HepG2 (cell line): ENCODE measurements at regions of chr2 and their contacts with region 1.

Region 1: DNA sequence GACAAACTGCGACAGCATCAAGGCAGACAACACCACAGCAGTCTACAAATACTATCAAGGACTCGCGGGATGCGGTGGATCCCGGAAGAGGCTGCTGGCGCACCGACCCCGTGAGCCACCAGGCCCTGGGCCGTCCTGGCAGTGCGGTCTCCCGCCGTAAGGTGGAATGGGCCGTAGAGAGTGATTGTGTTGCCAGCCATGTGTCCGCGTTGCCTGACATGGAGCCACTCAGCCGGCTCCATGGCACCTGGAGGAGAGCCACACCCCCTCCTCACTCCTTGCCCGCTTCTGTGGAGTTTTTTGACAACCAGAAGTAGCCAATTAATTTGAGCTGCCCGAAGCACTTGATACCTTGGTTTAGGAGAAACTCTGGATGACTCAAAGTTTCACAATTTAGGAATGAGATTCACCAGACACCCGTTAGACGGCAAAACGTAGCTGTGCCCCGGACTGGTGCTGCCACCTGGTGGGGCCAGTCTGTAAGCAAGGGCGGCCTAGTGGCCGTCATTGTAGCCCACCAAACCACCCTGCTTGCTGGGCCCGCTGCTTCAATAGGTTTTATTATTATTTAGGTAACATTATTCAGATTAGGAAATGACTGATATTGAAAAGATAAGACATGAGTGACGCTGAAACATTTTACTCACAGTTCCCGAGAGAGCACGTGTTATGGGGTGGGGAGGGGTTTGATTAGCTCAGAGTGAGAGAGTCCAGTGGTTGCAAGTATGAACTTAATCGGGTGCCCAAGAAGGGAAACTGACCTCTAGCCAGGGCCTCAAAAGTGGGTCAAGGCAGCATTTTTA is 10.2 kb upstream of the IMP4 start:
- DNase-seq: peak; percentile 54
- ATAC-seq: peak; percentile 62
- H3K4me3 ChIP-seq: peak overlapping the region; percentile 0 to 58 (median 53); a peak in 4 of 6 replicates
- H3K27ac ChIP-seq: no peak overlapping the region
- H3K4me1 ChIP-seq: peaks cover 46% of the 10 kb centered on the region
- H3K27me3 ChIP-seq: peaks cover 0 to 43% of the 10 kb centered on the region in 2 experiments; a peak in 3 of 5 replicates
- CTCF ChIP-seq: peak; percentile 97
- EP300 ChIP-seq: no peak
- POLR2A ChIP-seq: no peak
- RAD21 ChIP-seq: peak; percentile 95

Region 2: DNA sequence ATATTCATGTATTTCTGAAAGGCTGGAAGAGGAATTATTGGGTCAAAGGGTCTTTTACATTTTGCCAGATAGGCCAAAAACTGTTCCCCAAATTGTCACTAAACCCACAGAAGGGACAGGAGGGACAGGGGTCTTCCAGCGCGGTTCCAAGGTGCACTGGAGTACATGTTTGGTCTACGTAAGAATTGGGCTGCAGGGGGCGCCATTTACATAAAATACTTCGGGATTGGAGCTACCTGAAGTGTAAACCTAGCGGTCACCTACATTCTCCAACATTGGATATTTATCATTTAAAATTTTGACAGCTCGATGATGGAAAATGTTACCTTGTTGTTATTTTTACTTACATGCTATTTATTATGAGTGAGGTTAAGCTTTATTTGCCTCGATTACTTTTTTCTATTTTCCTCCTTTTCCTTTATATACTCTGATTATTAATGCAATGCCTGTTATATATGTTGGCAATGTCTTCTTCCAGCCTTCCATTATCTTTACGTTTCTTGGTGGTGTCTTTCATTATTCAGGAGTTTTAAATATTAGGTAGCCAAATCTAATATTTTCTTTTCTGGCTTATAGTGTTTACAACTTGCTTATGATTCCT is 396.0 kb before region 1 on chr2:
- CTCF ChIA-PET with region 1: interaction called, 3 read pairs
- POLR2A ChIA-PET with region 1: no interaction called
- in situ Hi-C with region 1: loop called (anchors 10 kb)
- intact Hi-C with region 1: no loop called
- DNase-seq: peak; percentile 54
- ATAC-seq: peak; percentile 82
- H3K4me3 ChIP-seq: no peak overlapping the region
- H3K27ac ChIP-seq: no peak overlapping the region
- H3K4me1 ChIP-seq: no peaks in the 10 kb centered on the region
- H3K27me3 ChIP-seq: peaks cover 5 to 32% of the 10 kb centered on the region in 2 experiments; a peak in 3 of 5 replicates
- CTCF ChIP-seq: peak; percentile 66
- EP300 ChIP-seq: no peak
- POLR2A ChIP-seq: no peak
- RAD21 ChIP-seq: no peak; the same call in 1 of the 2 replicates

Region 3: DNA sequence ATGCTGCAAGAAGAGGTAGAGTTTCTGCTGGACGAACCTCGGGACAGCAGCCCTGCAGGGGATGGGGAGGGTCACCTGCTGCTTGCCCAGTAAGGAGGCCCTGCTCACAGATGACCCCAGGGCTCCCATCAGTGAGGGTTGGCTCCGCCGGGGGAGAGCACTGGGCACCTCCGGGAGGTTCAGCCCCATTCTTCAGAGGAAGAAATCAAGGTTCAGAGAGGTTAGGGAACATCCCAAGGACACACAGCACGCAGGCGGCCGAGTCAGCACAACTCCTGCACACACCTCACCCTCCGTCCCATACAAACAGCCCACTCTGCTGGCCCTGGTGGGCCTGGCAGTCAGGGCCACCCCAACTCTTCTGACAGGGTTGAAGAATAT is 175.9 kb before region 1 on chr2:
- CTCF ChIA-PET with region 1: interaction called, 14 read pairs
- POLR2A ChIA-PET with region 1: no interaction called
- in situ Hi-C with region 1: loop called (anchors 10 kb)
- intact Hi-C with region 1: loop called (anchors 1 kb)
- DNase-seq: no peak
- ATAC-seq: no peak
- H3K4me3 ChIP-seq: no peak overlapping the region
- H3K27ac ChIP-seq: no peak overlapping the region
- H3K4me1 ChIP-seq: no peaks in the 10 kb centered on the region
- H3K27me3 ChIP-seq: no peaks in the 10 kb centered on the region
- CTCF ChIP-seq: no peak
- EP300 ChIP-seq: no peak
- POLR2A ChIP-seq: no peak
- RAD21 ChIP-seq: no peak

Region 4: GRCh38 chr2:130342533-130343275 is 10.2 kb after region 1 on chr2 and contains the start of gene IMP4:
- CTCF ChIA-PET with region 1: no interaction called
- POLR2A ChIA-PET with region 1: interaction called, 26 read pairs
- in situ Hi-C with region 1: no loop called
- intact Hi-C with region 1: no loop called
- DNase-seq: peak; percentile 100
- ATAC-seq: peak; percentile 93
- H3K4me3 ChIP-seq: peak within 1 kb of the TSS; percentile 78 to 99 (median 94)
- H3K27ac ChIP-seq: peak within 1 kb of the TSS; percentile 80
- H3K4me1 ChIP-seq: peaks cover 28% of the 10 kb centered on the region
- H3K27me3 ChIP-seq: peaks cover 0 to 4% of the 10 kb centered on the region in 2 experiments; a peak in 1 of 5 replicates
- CTCF ChIP-seq: peak; percentile 77
- EP300 ChIP-seq: 0 out of 4 replicates have a peak, but pooled peaks of 1 of the 2 experiments have one; percentile 24
- POLR2A ChIP-seq: peak; percentile 72 to 88
- RAD21 ChIP-seq: peak; percentile 84
- total RNA-seq, gene IMP4: 142 and 153 TPM in 2 replicates

Region 5: GRCh38 chr2:130372055-130372832 is 39.8 kb after region 1 on chr2:
- CTCF ChIA-PET with region 1: no interaction called
- POLR2A ChIA-PET with region 1: no interaction called
- in situ Hi-C with region 1: no loop called
- intact Hi-C with region 1: no loop called
- DNase-seq: no peak
- ATAC-seq: peak; percentile 17
- H3K4me3 ChIP-seq: no peak overlapping the region
- H3K27ac ChIP-seq: no peak overlapping the region
- H3K4me1 ChIP-seq: no peaks in the 10 kb centered on the region
- H3K27me3 ChIP-seq: no peaks in the 10 kb centered on the region
- CTCF ChIP-seq: peak; percentile 30; the same call in 1 of the 2 replicates
- EP300 ChIP-seq: no peak
- POLR2A ChIP-seq: no peak
- RAD21 ChIP-seq: no peak

Region 6: DNA sequence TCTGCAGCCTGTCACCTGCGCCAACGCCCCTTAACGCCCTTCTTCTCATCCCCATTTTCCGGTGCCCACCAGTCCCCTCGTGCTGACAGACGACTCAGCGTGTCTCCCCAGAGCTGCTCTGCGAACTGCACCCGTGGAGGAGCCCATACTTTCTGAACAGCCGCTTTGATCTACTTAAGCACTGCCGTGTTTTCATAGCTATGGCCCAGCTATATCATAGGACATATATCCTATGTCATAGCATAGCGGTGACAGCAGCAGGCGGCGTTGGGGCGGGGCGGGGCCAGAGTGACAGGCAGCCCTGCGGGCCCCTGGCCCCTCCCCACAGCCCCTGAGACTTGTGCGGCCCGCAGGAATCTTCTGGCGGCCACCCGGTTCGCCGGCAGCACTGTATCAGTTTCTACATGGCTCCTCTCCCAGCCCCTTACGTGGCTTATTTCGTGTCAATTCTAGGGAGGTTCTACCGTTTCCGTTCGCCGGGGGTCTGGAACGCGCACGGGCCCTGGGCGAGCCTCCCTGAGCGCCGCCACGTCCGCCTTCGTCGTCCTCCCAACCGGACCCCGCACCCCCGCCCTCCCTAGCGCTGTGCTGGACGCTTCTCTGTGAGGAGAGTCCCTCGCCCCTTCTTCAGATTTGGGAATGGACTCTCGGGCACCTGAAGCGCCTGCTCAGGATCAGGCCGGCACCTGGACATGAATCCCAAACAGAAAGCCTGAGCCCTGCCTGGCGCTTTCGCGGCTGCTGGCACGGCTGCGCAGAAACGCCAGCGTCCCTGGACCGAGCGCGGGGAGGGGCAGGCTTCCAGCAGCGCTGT is 58.8 kb after region 1 on chr2:
- CTCF ChIA-PET with region 1: no interaction called
- POLR2A ChIA-PET with region 1: interaction called, 4 read pairs
- in situ Hi-C with region 1: no loop called
- intact Hi-C with region 1: loop called (anchors 2 kb)
- DNase-seq: peak; percentile 55
- ATAC-seq: peak; percentile 93
- H3K4me3 ChIP-seq: peak overlapping the region; percentile 75 to 82 (median 78)
- H3K27ac ChIP-seq: peak overlapping the region; percentile 36
- H3K4me1 ChIP-seq: peaks cover 31% of the 10 kb centered on the region
- H3K27me3 ChIP-seq: peaks cover 2 to 13% of the 10 kb centered on the region in 2 experiments; a peak in 2 of 5 replicates
- CTCF ChIP-seq: no peak
- EP300 ChIP-seq: no peak
- POLR2A ChIP-seq: peak; percentile 39 to 79; a peak in 3 of 4 replicates
- RAD21 ChIP-seq: 0 out of 2 replicates have a peak, but pooled peaks have one; percentile 6

Region 7: DNA sequence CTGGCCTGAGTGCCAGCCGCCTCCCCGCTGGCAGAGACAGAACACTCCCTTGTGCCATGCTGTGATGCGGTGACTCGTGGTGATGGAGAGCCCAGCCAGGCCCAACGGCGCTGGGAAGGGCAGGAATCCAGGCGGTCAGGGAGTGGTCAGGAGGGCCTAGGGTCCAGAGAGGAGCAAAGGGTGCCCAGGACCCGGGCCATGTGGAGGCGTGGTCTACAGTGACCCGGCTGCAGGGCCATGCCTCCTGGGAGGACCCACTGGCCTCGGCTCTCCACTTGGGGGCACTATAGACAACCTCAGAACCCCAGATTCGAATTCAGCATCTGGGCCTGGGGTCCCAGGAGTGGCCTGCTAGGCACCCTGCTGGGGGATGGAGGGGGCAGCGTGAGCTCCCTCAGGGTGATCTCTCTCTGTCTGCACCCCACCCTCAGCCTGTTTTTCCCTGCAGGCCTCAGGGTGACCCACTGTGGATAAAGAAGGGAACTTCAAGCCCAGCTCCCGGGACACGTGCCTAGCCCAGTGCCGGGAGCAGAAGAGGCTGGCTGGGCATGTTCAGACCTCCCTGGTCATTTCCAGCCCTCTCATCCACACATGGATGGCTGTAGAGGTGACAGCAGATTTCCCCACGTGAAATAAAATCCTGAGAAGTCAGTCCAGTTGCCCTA is 435.9 kb after region 1 on chr2:
- CTCF ChIA-PET with region 1: no interaction called
- POLR2A ChIA-PET with region 1: no interaction called
- in situ Hi-C with region 1: no loop called
- intact Hi-C with region 1: no loop called
- DNase-seq: no peak
- ATAC-seq: peak; percentile 66
- H3K4me3 ChIP-seq: no peak overlapping the region
- H3K27ac ChIP-seq: no peak overlapping the region
- H3K4me1 ChIP-seq: no peaks in the 10 kb centered on the region
- H3K27me3 ChIP-seq: peaks cover 1 to 9% of the 10 kb centered on the region in 2 experiments; a peak in 2 of 5 replicates
- CTCF ChIP-seq: peak; percentile 30
- EP300 ChIP-seq: no peak
- POLR2A ChIP-seq: no peak
- RAD21 ChIP-seq: no peak